ENCODE measurements at regions of chr1 and their contacts with region 1.

Region 1: GRCh38 chr1:66300972-66301451 is 232.9 kb upstream of the SGIP1 start:
- DNase-seq: peak; percentile 43
- ATAC-seq: peak; percentile 96
- H3K4me3 Mint-ChIP-seq: peak overlapping the region; percentile 26
- H3K27ac Mint-ChIP-seq: peak overlapping the region; percentile 60
- H3K4me1 Mint-ChIP-seq: peaks cover 48% of the 10 kb centered on the region
- H3K27me3 Mint-ChIP-seq: no peaks in the 10 kb centered on the region

Region 2: GRCh38 chr1:66258404-66259105 is 42.5 kb before region 1 on chr1:
- CTCF ChIA-PET with region 1: interaction called, 9 read pairs
- POLR2A ChIA-PET with region 1: no interaction called
- intact Hi-C with region 1: loop called (anchors 1 to 2 kb)
- DNase-seq: no peak
- ATAC-seq: peak; percentile 91
- H3K4me3 Mint-ChIP-seq: no peak overlapping the region
- H3K27ac Mint-ChIP-seq: peak overlapping the region; percentile 68
- H3K4me1 Mint-ChIP-seq: peaks cover 90% of the 10 kb centered on the region
- H3K27me3 Mint-ChIP-seq: no peaks in the 10 kb centered on the region